Activated CD4-positive, alpha-beta memory T cell treated with anti-CD3 and anti-CD28 coated beads for 36 hours (primary cell): ENCODE measurements at regions of chr21 and their contacts with region 1.

Region 1: GRCh38 chr21:38733973-38734546 is 71.7 kb upstream of the ETS2 start:
- DNase-seq: peak; percentile 78
- H3K4me3 Mint-ChIP-seq: peak overlapping the region; percentile 65
- H3K27ac Mint-ChIP-seq: no peak overlapping the region
- H3K4me1 Mint-ChIP-seq: peaks cover 10% of the 10 kb centered on the region
- H3K27me3 Mint-ChIP-seq: peaks cover 24% of the 10 kb centered on the region

Region 2: DNA sequence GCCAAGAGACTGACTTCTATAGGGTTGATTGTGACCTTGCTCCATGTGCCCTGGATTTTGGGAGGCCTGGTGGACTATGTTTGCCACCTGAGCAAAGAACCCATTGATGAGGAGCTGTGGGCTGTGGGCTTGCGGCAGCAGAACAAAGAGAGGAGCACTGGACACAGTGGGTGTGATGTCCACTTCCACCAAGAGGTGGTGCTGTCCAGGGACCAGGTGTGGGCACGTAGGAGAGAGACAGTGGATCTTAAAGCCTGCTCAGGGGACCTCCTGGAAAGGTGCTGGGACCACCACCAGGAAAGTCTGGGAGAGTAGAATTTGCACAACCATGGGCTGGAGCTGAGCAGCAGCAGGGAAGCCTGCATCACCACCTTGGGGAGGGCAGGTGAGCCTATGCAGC is 35.0 kb before region 1 on chr21:
- CTCF ChIA-PET with region 1: no interaction called
- POLR2A ChIA-PET with region 1: no interaction called
- intact Hi-C with region 1: no loop called
- DNase-seq: no peak
- H3K4me3 Mint-ChIP-seq: no peak overlapping the region
- H3K27ac Mint-ChIP-seq: no peak overlapping the region
- H3K4me1 Mint-ChIP-seq: no peaks in the 10 kb centered on the region
- H3K27me3 Mint-ChIP-seq: peaks cover 13% of the 10 kb centered on the region

Region 3: DNA sequence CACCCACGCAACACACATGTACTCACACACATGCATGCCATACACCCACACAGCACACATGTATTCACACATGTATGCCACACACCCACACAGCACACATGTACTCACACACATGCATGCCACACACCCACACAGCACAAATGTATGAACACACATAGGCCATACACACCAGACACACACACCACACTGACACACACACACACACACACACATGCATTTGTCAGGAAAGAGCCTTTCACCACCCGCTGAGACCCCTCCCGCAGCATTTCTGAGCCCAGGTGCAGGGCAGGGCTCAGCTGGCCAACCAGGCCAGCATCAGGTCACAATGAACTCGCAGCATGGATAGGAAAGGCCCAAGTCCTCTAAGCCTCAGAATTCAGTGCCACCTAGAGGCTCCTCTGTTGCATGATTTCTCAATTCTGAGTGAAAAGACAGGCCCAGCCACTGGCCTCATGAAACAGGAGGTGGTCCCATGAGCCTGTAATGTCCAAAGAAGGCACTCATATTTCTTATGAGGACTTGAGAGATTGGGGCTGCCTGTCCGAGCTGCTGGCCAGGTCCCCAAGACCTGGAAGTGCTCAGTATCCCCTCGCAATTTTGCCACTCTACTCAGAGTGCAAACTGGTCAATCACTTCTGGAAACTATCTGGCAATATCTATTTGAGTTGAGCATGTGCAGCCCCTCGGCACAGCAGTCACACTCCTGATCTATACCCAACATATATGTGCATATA is 391.9 kb after region 1 on chr21:
- CTCF ChIA-PET with region 1: interaction called, 5 read pairs
- POLR2A ChIA-PET with region 1: no interaction called
- intact Hi-C with region 1: loop called (anchors 1 kb)
- DNase-seq: peak; percentile 15
- H3K4me3 Mint-ChIP-seq: no peak overlapping the region
- H3K27ac Mint-ChIP-seq: no peak overlapping the region
- H3K4me1 Mint-ChIP-seq: no peaks in the 10 kb centered on the region
- H3K27me3 Mint-ChIP-seq: peaks cover 6% of the 10 kb centered on the region